CD14-positive monocyte (primary cell): ENCODE measurements at regions of chr19 and their contacts with region 1.

Region 1: DNA sequence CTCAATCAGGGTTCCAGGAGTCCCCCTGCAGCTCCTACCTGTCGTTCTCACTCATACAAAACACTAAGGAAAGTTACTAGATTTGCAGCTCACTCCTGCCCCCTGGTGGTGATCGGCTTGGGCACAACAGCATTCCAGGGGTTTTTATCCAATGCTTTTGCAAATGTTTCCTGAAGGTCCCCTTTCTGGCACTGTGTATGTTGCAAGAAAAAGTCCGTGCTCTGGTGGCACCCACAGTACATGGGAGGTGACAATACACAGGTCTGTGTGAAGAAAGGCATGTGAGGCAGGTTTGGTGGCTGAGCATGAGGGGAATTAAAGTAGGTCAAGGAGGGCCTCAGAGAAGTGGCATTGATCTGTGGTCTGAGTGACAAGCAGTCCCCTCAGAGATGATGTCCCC is 8.6 kb upstream of the TYK2 start:
- DNase-seq: peak; percentile 73 to 85 (median 83)
- H3K4me3 ChIP-seq: no peak overlapping the region
- H3K4me3 Mint-ChIP-seq: no peak overlapping the region
- H3K27ac ChIP-seq: no peak overlapping the region
- H3K27ac Mint-ChIP-seq: peak overlapping the region in 4 of 7 donors; percentile 18 to 75 (median 60)
- H3K4me1 ChIP-seq: peaks cover 0 to 6% of the 10 kb centered on the region in 2 donors
- H3K4me1 Mint-ChIP-seq: peaks cover 5% of the 10 kb centered on the region
- H3K27me3 ChIP-seq: no peaks in the 10 kb centered on the region
- H3K27me3 Mint-ChIP-seq: peaks cover 0 to 9% (median 0%) of the 10 kb centered on the region in 3 donors
- CTCF ChIP-seq: peak; percentile 97

Region 2: DNA sequence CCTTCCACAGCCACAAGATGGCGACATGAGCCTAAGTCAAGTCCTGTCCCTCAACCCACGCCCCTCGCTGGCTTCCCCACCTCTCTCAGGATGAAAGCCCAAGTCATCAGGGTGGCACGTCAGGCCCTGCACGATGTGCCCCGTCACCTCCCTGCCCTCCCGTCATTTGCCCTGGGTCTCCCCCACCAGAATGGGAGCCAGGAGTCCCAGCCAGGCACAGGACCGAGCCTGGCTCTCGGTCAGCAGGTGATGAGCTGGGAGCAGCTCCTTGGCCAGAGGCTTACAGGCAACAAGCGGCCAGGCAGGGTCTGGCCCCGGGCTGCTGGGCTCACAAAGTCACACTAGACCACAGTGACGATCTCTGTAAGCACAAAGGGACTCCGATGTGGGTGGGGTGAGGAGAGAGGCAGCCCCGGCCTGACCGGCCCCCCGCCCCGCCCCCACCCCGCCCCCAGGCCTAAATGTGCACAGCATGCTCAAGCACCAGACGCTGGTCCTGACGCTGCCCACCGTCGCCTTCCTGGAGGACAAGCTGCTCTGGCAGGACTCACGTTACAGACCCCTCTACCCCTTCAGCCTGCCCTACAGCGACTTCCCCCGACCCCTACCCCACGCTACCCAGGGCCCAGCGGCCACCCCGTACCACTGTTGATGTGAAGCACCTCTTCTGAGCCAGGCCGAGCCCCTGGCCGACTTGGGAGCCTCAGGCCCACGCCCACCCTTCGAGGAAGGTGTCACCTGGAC is 129.6 kb before region 1 on chr19:
- intact Hi-C with region 1: loop called (anchors 2 kb)
- DNase-seq: peak; percentile 78 to 88 (median 79)
- H3K4me3 ChIP-seq: no peak overlapping the region
- H3K4me3 Mint-ChIP-seq: no peak overlapping the region
- H3K27ac ChIP-seq: no peak overlapping the region
- H3K27ac Mint-ChIP-seq: peak overlapping the region in 1 of 7 donors; percentile 59
- H3K4me1 ChIP-seq: no peaks in the 10 kb centered on the region
- H3K4me1 Mint-ChIP-seq: peaks cover 3% of the 10 kb centered on the region
- H3K27me3 ChIP-seq: no peaks in the 10 kb centered on the region
- H3K27me3 Mint-ChIP-seq: peaks cover 0 to 8% (median 1%) of the 10 kb centered on the region in 3 donors
- CTCF ChIP-seq: peak; percentile 72

Region 3: DNA sequence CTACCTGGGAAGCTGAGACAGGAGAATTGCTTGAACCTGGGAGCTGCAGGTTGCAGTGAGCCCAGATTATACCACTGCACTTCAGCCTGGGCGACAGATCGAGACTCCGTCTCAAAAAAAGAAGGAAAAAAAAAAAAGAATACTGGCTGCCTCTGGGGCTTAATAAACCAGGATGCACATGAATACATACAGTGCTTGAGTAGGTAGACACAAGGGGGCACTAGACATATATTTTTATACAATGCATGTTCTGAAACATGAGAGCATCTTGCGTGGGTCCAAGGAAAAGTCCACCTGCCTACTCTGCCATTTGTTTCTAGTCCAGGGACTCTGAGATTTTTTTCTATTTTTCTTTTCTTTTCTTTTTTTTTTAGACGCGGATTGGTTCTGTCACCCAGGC is 83.0 kb after region 1 on chr19:
- intact Hi-C with region 1: no loop called
- DNase-seq: peak in 1 of 3 donors; percentile 10
- H3K4me3 ChIP-seq: no peak overlapping the region
- H3K4me3 Mint-ChIP-seq: no peak overlapping the region
- H3K27ac ChIP-seq: no peak overlapping the region
- H3K27ac Mint-ChIP-seq: no peak overlapping the region
- H3K4me1 ChIP-seq: no peaks in the 10 kb centered on the region
- H3K4me1 Mint-ChIP-seq: no peaks in the 10 kb centered on the region
- H3K27me3 ChIP-seq: no peaks in the 10 kb centered on the region
- H3K27me3 Mint-ChIP-seq: peaks cover 1 to 13% (median 2%) of the 10 kb centered on the region in 3 donors
- CTCF ChIP-seq: peak; percentile 39